H1 (cell line): ENCODE measurements at regions of chr5 and their contacts with region 1.

Region 1: GRCh38 chr5:34717426-34718327 is 61.5 kb downstream of the RAI14 start:
- DNase-seq: peak; percentile 44 to 63
- H3K4me3 ChIP-seq: peak overlapping the region in 1 of 4 experiments; percentile 15; a peak in 1 of 8 replicates
- H3K27ac ChIP-seq: peak overlapping the region; percentile 54; the same call in 1 of the 2 replicates
- H3K4me1 ChIP-seq: peaks cover 13 to 34% (median 22%) of the 10 kb centered on the region in 4 experiments; a peak in 6 of 7 replicates
- H3K27me3 ChIP-seq: no peaks in the 10 kb centered on the region
- CTCF ChIP-seq: no peak
- EP300 ChIP-seq: no peak
- POLR2A ChIP-seq: peak in 1 of 2 experiments; percentile 51; a peak in 1 of 3 replicates
- RAD21 ChIP-seq: no peak

Region 2: GRCh38 chr5:34703767-34704713 is 13.6 kb before region 1 on chr5:
- CTCF ChIA-PET with region 1: interaction called, 3 read pairs
- POLR2A ChIA-PET with region 1: interaction called, 13 read pairs
- DNase-seq: no peak
- H3K4me3 ChIP-seq: peak overlapping the region in 1 of 4 experiments; percentile 36; a peak in 2 of 8 replicates
- H3K27ac ChIP-seq: 0 out of 2 replicates have a peak overlapping the region, but pooled peaks have one; percentile 21
- H3K4me1 ChIP-seq: peaks cover 11 to 40% (median 22%) of the 10 kb centered on the region in 4 experiments
- H3K27me3 ChIP-seq: no peaks in the 10 kb centered on the region
- CTCF ChIP-seq: no peak
- EP300 ChIP-seq: no peak
- POLR2A ChIP-seq: no peak
- RAD21 ChIP-seq: no peak

Region 3: GRCh38 chr5:34735491-34736363 is 18.1 kb after region 1 on chr5:
- CTCF ChIA-PET with region 1: interaction called, 5 read pairs
- POLR2A ChIA-PET with region 1: interaction called, 12 read pairs
- DNase-seq: no peak
- H3K4me3 ChIP-seq: no peak overlapping the region
- H3K27ac ChIP-seq: no peak overlapping the region
- H3K4me1 ChIP-seq: peaks cover 6 to 10% (median 9%) of the 10 kb centered on the region in 4 experiments
- H3K27me3 ChIP-seq: no peaks in the 10 kb centered on the region
- CTCF ChIP-seq: no peak
- EP300 ChIP-seq: no peak
- POLR2A ChIP-seq: no peak
- RAD21 ChIP-seq: no peak